Activated CD4-positive, alpha-beta T cell treated with anti-CD3 and anti-CD28 coated beads for 36 hours (primary cell): ENCODE measurements at regions of chr18 and their contacts with region 1.

Region 1: DNA sequence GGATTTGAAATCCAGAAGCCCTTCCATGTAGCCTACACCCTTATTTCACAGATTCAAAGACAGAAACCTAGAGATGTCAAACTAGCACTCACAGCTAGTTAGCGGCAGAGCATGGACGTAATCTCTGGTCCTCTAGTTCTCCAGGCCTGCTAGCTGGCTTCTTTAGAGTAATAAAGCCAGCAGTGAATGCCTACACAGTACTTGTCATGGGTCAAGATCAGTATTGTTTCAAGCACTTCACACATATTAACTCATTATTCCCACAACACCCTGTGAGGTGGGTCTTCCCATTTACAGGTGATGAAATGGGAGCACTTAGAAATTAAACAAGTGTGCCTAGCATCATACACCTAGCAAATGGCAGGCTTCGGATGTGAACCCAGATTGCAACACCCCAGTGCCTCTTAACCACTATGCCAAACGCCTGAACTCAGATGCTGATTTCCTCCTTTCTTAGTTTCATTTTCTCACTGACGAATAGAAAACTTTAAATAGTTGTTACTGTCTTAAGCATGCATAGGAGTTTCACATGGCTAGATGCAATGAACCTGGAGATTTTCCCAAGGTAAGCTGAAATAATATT is 14.5 kb upstream of the ZBTB14 start:
- DNase-seq: peak; percentile 56
- ATAC-seq: peak; percentile 96
- H3K4me3 Mint-ChIP-seq: peak overlapping the region; percentile 66
- H3K27ac Mint-ChIP-seq: peak overlapping the region; percentile 80
- H3K4me1 Mint-ChIP-seq: peaks cover 22% of the 10 kb centered on the region
- H3K27me3 Mint-ChIP-seq: no peaks in the 10 kb centered on the region

Region 2: GRCh38 chr18:5295981-5296705 is 13.8 kb before region 1 on chr18:
- CTCF ChIA-PET with region 1: interaction called, 4 read pairs
- POLR2A ChIA-PET with region 1: interaction called, 3 read pairs
- intact Hi-C with region 1: loop called (anchors 1 to 2 kb)
- DNase-seq: peak; percentile 96
- ATAC-seq: peak; percentile 64
- H3K4me3 Mint-ChIP-seq: peak overlapping the region; percentile 89
- H3K27ac Mint-ChIP-seq: peak overlapping the region; percentile 98
- H3K4me1 Mint-ChIP-seq: peaks cover 34% of the 10 kb centered on the region
- H3K27me3 Mint-ChIP-seq: peaks cover under 1% of the 10 kb centered on the region